Transverse colon (tissue), 4 donors: ENCODE measurements at regions of chr19 and their contacts with region 1.

Region 1: DNA sequence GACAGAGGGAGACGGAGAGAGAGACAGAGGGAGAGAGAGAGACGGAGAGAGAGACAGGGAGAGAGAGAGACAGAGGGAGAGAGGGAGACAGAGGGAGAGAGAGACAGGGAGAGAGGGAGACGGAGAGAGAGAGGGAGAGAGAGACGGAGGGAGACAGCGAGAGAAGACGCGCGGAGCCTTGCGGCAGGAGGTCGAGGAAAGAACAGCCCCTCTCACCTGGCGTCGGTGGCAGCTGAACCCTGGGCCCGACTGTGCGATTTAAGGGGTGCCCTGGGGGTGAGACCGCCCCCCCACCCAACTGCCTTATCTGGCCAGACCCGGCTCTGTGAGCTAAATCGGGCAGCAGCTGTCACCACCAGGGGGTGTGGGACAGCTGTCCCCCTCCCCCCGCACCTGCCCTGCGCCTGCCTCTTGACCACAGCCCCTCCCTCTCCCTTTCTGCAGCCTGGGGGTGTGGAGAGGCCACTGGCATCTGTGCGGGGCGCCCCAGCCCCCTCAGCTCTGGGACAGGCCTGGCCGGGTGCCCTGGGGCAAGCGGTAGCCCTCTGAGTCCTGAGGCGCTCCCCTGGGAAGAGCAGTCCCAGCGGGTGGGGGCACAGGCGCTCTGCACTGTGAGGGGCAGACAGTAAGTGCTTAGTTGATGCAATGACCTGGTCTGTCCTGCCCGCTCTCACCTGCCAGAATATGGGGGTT is 10.8 kb downstream of the JOSD2 start:
- DNase-seq: no peak
- H3K4me3 ChIP-seq: no peak overlapping the region
- H3K27ac ChIP-seq: no peak overlapping the region
- H3K4me1 ChIP-seq: peaks cover 0 to 7% (median 6%) of the 10 kb centered on the region in 4 donors
- H3K27me3 ChIP-seq: no peaks in the 10 kb centered on the region
- CTCF ChIP-seq: no peak
- EP300 ChIP-seq: no peak
- POLR2A ChIP-seq: no peak

Region 2: GRCh38 chr19:49877879-49878743 is 622.1 kb before region 1 on chr19:
- in situ Hi-C with region 1: no loop called
- intact Hi-C with region 1: loop called (anchors 5 kb)
- DNase-seq: peak; percentile 99
- H3K4me3 ChIP-seq: peak overlapping the region; percentile 50 to 98 (median 78)
- H3K27ac ChIP-seq: peak overlapping the region; percentile 96 to 99 (median 98)
- H3K4me1 ChIP-seq: peaks cover 11 to 24% (median 17%) of the 10 kb centered on the region in 4 donors
- H3K27me3 ChIP-seq: no peaks in the 10 kb centered on the region
- CTCF ChIP-seq: no peak
- EP300 ChIP-seq: no peak
- POLR2A ChIP-seq: peak; percentile 5

Region 3: DNA sequence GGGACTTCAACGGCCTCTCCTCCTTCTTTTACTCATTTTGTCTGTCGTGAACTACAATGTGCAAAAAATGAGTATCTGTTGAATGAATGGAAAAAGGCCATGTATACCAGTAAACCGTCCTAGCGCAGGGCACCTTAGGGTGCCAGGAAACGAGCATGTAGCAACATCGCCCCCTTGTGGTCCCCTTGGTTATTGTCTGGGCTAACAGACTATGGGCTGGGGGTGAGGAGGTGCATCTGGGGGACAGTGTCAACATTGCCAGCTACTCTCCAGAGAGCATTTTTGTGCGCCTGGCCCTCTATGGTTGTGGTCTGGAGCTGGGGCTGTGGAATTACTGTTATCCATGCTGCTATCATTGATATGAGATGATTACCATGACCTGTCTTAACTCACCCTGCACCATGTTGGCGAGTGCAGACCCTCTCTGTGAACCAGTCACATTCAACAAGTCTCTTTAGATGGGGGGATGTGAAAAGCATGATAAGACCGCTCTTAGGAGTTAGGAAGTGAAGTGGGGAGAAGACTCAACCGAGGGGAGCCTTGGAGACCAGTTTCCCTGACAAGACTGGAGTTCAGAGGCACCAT is 516.5 kb before region 1 on chr19:
- in situ Hi-C with region 1: no loop called
- intact Hi-C with region 1: no loop called
- DNase-seq: peak; percentile 68
- H3K4me3 ChIP-seq: no peak overlapping the region
- H3K27ac ChIP-seq: no peak overlapping the region
- H3K4me1 ChIP-seq: no peaks in the 10 kb centered on the region
- H3K27me3 ChIP-seq: no peaks in the 10 kb centered on the region
- CTCF ChIP-seq: peak; percentile 84 to 90 (median 90)
- EP300 ChIP-seq: no peak
- POLR2A ChIP-seq: no peak

Region 4: GRCh38 chr19:50258918-50259372 is 241.3 kb before region 1 on chr19:
- in situ Hi-C with region 1: no loop called
- intact Hi-C with region 1: no loop called
- DNase-seq: peak; percentile 24
- H3K4me3 ChIP-seq: no peak overlapping the region
- H3K27ac ChIP-seq: no peak overlapping the region
- H3K4me1 ChIP-seq: no peaks in the 10 kb centered on the region
- H3K27me3 ChIP-seq: no peaks in the 10 kb centered on the region
- CTCF ChIP-seq: peak; percentile 17 to 46 (median 40)
- EP300 ChIP-seq: no peak
- POLR2A ChIP-seq: no peak